Activated CD4-positive, alpha-beta T cell treated with anti-CD3 and anti-CD28 coated beads, Interleukin-2, amount 10 ng/mL, durations not matched to agents 24 days and 14 days (primary cell): ENCODE measurements at regions of chr5 and their contacts with region 1.

Region 1: DNA sequence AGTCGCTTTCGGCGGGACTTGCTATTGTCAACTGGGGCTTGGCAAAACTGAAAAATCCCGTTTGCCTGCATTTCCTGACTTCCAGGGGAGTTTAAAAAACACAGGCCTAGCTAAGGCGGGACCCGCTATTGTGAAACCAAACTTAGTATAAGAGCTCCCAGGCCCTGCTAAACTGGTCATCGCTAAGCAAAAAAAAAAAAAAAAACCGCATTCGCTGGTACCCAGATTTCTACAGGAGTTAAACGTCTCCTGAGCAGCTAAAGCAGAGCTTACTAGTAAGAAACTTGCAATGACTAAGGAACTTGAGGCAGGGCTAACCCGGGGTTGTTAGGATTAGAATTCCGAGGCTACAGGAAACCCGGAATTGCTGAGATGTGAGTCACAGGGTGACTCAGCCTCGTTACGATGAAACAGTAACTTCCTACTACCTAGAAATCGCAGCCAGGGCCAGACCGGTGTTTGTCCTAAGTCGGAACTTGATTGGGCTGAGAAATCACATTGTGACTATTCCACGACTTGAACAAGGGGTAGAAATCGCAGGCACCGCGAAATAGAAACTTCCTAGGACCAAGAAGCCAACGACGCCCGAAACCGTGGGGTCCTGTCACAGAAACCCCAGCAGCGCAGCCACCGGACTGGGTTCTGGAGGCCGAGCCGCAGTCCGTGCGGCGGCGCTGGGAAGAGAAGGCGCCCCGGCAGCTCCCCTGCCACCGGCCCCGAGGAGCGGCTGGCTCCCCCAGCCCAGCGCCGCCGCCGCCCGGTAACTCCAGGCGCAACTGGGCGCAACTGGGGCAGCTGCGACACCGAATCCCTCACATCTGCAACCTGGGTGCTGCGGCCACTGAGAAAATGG is 89.5 kb downstream of the ANXA2R start:
- DNase-seq: peak; percentile 89
- H3K4me3 Mint-ChIP-seq: peak overlapping the region; percentile 95
- H3K27ac Mint-ChIP-seq: peak overlapping the region; percentile 100
- H3K4me1 Mint-ChIP-seq: peaks cover 37% of the 10 kb centered on the region
- H3K27me3 Mint-ChIP-seq: peaks cover 5% of the 10 kb centered on the region

Region 2: DNA sequence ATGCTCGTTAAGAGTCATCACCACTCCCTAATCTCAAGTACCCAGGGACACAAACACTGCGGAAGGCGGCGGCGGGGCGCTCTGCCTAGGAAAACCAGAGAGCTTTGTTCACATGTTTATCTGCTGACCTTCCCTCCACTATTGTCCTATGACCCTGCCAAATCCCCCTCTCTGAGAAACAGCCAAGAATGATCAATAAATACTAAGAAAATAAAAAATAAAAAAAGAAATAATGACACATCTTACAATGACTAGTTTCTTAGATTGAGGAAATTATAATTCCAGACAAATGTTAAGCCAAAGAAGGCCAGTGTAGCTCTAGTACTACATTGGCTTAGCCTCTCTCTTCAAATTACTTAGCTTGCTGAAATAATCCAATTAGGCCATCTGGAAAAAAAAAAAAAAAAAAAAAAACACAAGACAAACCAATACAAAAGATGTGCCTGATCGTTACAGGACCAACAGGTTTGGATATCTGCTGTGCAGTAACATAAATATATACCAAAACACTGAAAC is 31.5 kb after region 1 on chr5:
- intact Hi-C with region 1: no loop called
- DNase-seq: no peak
- H3K4me3 Mint-ChIP-seq: no peak overlapping the region
- H3K27ac Mint-ChIP-seq: no peak overlapping the region
- H3K4me1 Mint-ChIP-seq: peaks cover 17% of the 10 kb centered on the region
- H3K27me3 Mint-ChIP-seq: no peaks in the 10 kb centered on the region

Region 3: DNA sequence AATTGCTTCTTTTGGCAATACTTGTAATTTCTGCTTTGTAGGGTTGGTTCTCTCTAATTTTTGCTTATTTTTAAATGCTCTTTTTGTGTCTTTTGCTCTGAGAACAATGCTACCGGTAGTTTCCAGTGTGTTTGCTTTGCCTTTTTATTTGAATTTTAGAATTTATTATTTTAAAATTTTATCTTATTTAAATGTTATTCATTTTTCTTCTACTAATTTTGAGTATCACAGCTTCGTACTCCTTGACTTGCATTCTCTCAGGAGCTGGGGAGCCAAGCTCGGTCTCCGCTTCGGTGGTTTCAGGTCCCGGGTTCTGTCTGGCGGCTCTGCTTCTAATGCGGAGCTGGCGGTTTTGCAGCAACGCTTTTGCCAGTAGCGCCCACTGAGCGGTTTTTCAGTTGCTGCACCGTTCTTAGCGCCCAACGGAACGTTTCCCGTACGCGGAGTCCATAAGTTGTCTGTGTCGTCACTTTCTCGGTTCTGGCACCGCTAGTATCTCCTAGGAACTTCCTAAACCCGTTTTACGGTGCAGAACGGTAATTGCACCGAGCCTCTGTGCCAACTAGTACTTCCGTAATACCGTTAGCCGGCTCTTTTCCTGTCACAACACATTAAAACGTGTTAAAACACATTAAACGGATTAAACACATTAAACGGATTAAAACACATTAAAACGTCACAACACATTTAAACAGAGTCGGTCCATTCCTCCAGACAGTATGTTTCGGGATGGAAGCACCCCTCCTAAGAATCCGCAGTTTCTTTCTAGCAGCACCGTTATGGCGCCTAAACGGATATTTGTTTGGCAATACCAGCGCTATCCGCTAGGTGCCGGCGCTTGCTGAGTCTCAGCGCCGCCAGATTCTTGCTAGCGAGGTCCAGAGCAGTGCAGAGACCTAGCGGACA is 43.8 kb after region 1 on chr5:
- intact Hi-C with region 1: loop called (anchors 1 kb)
- DNase-seq: peak; percentile 97
- H3K4me3 Mint-ChIP-seq: peak overlapping the region; percentile 96
- H3K27ac Mint-ChIP-seq: peak overlapping the region; percentile 100
- H3K4me1 Mint-ChIP-seq: peaks cover 40% of the 10 kb centered on the region
- H3K27me3 Mint-ChIP-seq: no peaks in the 10 kb centered on the region

Region 4: DNA sequence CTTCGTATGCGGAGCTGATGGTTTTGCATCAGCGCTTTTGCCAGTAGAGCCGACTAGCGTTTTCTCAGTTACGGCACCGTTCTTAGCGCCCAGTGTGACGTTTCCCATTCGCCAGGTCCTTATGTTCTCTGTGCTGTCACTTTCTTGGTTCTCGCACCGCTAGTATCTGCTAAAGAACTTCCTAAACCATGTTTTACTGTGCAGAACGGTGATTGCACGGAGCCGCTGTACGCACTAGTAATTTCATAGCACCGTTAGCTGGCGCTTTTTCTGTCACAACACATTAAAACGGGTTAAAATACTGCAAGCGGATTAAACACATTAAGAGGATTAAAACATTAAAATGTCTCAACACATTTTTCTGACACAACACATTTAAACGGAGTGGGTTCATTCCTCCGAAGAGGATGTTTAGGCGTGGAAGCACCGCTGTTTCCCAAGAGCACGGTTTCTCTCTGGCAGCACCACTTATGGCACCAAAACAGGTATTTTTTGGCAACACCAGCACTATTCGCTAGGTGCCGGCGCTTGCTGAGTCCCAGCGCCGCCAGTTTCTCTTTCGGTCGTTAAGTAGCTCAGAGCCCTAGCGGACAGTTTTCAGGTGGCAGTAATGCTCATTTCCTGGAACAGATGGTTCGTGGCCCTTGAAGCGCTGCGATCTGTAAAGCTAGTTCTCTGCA is 69.1 kb after region 1 on chr5:
- intact Hi-C with region 1: loop called (anchors 1 kb)
- DNase-seq: peak; percentile 95
- H3K4me3 Mint-ChIP-seq: peak overlapping the region; percentile 97
- H3K27ac Mint-ChIP-seq: peak overlapping the region; percentile 100
- H3K4me1 Mint-ChIP-seq: peaks cover 45% of the 10 kb centered on the region
- H3K27me3 Mint-ChIP-seq: no peaks in the 10 kb centered on the region

Region 5: DNA sequence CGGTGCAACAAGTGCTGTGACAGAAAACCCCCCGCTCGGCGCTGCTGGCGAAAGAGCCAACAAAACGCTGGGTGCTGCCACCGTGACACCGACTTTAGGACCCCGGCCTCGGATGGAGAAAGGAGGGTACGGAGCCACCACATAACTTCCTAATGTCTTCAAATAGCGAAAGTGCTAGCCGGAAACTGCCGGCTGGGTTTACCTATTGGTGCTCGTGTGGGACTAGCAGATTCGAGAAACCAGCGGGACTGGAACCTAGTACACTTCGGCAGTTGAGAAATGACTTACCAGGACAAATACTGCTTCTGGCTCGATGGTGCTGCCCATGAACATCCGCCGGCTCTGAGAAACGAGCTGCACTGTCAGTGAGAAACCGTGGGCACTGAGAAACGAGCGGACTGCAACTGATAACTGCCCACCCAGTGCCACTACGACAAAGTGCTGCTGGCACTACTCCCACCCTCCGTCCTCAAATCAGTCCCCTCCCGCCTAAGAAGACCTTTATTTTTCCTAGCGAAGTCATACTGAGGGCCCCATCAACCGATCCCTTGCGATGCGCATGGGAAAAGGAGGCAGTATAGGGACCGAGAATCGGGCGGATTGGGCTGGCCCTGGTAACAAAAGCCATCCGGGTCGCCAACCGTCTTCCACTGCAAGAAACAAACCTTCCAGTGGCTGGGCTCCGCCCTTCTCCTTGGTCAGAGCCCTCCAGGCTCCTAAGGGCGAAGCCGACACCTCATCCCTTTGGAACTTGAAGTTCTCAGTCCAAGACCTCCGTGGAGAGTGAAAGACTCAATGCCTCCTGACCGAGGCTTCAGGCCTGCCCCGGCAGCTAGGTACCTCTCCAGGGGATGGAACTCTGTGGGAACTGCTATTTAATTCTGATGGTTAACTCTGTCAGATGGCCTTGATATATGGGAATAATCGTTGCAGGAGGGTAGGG is 116.4 kb after region 1 on chr5:
- intact Hi-C with region 1: loop called (anchors 1 kb)
- DNase-seq: peak; percentile 96
- H3K4me3 Mint-ChIP-seq: peak overlapping the region; percentile 92
- H3K27ac Mint-ChIP-seq: peak overlapping the region; percentile 100
- H3K4me1 Mint-ChIP-seq: peaks cover 32% of the 10 kb centered on the region
- H3K27me3 Mint-ChIP-seq: no peaks in the 10 kb centered on the region

Region 6: DNA sequence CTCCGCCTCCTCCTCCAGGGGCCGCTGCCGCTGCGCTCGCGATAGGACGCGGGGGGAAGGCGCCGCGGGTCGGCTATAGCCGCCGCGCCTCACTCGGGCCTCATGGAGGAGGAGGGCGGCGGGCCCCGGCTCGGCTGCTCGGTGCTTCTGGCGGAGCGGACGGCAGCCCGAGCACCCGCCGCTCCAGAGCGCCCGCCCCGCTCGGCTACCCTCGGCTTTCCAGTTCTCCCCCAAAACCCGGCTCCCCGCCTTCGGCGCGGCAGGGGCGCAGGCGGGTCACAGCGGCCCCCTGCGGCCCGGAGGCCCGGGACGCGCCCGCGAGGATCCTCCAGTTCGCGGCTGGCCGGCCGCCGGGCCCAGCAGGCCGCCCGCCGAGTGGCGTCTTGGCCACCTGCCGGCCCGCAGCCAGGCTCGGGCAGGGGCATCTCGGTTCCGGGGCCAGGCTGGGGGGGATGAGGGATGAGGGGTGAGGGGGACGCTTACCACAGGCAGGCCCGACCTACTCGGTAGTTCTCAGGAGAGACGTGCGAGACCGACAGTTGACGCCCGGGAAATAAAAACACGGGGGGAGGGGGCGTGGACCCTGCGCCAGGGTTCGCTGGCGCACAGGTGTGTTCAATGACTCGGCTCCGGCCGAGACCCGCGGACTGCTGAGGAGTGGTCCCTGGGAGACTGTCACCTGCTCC is 606.3 kb after region 1 on chr5 and contains the start of gene PAIP1:
- intact Hi-C with region 1: loop called (anchors 2 kb)
- DNase-seq: peak; percentile 96
- H3K4me3 Mint-ChIP-seq: peak within 1 kb of the TSS; percentile 91
- H3K27ac Mint-ChIP-seq: peak within 1 kb of the TSS; percentile 90
- H3K4me1 Mint-ChIP-seq: peaks cover 12% of the 10 kb centered on the region
- H3K27me3 Mint-ChIP-seq: peaks cover 13% of the 10 kb centered on the region
- total RNA-seq, gene PAIP1: 60.2 and 64.1 TPM in 2 replicates